Endothelial cell of umbilical vein (primary cell): ENCODE measurements at regions of chr1 and their contacts with region 1.

Region 1: DNA sequence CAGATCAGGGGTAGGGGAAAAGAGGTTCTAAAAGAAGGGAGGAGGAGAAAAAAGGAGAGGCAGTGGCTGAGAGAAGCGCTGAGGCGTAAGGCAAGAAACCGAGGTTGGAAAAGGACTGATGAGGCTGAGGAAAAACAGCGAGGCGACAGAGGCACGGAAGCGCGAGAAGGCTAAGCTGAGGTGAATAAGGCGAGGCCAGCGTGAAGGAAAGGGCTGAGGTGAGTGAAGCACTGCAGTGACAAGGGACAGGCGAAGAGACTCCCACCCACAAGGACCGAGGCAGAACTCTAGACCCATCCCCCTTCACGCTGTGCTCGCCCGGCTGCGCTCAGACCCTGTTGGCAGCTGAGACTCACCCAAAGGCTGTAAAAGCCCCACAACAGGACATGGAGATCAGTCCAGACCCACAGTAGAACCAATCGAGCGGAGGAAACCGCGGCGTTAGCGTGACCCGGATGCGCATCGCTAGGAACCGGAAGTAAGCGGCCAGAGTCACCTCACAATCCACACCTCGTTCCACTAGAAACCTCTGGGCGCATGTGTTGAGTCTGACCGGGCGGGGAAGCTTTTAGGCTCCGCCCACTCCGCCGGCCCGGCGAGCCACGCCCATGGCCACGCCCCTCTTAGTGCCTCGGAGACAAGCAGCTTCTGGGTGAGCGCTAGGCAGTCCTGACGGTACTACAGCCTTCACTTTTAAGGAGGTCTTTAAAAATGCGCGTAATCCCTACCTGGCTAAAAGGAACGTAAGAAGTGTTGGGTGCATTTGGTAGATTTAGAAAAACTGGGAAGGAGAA is at the start of gene EYA3:
- DNase-seq: peak; percentile 100
- H3K4me3 ChIP-seq: peak within 1 kb of the TSS; percentile 51 to 81 (median 73)
- H3K27ac ChIP-seq: peak within 1 kb of the TSS; percentile 45
- H3K4me1 ChIP-seq: peaks cover 12% of the 10 kb centered on the region
- H3K27me3 ChIP-seq: no peaks in the 10 kb centered on the region
- CTCF ChIP-seq: no peak
- POLR2A ChIP-seq: peak; percentile 96
- total RNA-seq, gene EYA3: 29.7 and 33.0 TPM in 2 replicates

Region 2: DNA sequence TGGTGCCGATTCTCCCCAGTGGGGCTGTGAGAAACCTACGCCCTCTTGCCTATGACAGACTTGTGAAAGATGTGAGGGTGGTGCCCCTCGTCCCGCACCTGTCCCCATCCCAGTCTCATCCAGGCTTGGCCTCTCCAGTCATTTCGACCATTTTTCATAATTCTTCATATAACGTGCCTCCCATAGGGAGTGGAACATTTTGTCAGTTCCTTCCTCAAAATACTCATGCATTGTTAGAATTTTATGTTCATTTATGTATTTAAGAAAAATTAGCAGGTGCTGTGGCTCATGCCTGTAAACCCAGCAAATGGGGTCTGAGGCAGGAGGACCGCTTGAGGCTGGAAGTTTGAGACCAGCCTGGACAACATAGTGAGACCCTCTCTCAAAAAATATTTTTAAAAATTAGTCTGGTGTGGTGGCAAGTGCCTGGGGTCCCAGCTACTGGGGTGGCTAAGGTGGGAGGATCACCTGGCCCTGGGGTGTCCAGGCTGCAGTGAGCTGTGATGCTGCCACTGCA is 173.2 kb before region 1 on chr1:
- CTCF ChIA-PET with region 1: no interaction called
- POLR2A ChIA-PET with region 1: no interaction called
- dilution Hi-C with region 1: no loop called
- intact Hi-C with region 1: no loop called
- DNase-seq: no peak
- H3K4me3 ChIP-seq: no peak overlapping the region
- H3K27ac ChIP-seq: no peak overlapping the region
- H3K4me1 ChIP-seq: peaks cover 5% of the 10 kb centered on the region
- H3K27me3 ChIP-seq: no peaks in the 10 kb centered on the region
- CTCF ChIP-seq: no peak
- POLR2A ChIP-seq: no peak

Region 3: DNA sequence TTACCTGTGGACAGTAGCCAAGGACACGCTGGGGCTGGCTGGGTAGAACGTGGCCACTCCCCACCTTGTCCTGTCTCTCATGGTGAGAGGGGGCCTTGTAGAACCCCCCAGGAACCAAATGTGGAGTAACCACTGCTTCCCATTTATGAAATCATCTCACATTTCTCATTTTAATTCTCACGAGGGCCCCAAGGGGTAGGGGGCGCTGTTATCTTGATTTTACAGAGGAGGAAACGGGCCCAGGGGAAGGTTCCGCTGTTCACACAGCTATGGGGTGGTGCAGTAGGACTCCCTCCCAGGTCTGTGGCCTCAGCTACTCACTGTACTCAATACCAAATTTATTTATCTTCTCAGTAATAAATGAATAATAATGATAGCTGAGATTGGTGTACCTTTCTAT is 148.1 kb before region 1 on chr1:
- CTCF ChIA-PET with region 1: interaction called, 7 read pairs
- POLR2A ChIA-PET with region 1: no interaction called
- dilution Hi-C with region 1: no loop called
- intact Hi-C with region 1: loop called (anchors 1 kb)
- DNase-seq: peak; percentile 44
- H3K4me3 ChIP-seq: no peak overlapping the region
- H3K27ac ChIP-seq: no peak overlapping the region
- H3K4me1 ChIP-seq: peaks cover 7% of the 10 kb centered on the region
- H3K27me3 ChIP-seq: peaks cover 0 to 5% of the 10 kb centered on the region in 2 experiments
- CTCF ChIP-seq: peak; percentile 34 to 44
- POLR2A ChIP-seq: no peak

Region 4: DNA sequence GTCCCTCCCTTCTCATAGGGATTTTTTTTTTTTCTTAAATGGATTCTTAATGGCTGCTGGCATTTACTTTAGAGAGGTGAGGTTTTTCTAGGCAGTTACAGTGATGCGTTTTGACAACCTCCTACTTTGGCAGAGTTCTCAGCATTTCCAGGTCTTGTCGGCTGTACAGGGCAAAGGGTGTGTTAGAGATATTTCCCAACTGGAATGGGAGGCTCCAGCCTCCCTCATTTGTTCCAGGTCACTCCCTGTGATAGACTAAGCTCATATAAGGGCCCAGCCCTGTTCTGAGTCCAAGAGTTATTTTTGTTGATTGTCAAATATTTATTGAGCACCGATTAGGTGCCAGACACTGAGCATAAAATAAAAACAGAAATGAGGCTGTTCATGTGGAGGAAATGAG is 136.2 kb before region 1 on chr1:
- CTCF ChIA-PET with region 1: no interaction called
- POLR2A ChIA-PET with region 1: no interaction called
- dilution Hi-C with region 1: no loop called
- intact Hi-C with region 1: no loop called
- DNase-seq: no peak
- H3K4me3 ChIP-seq: no peak overlapping the region
- H3K27ac ChIP-seq: no peak overlapping the region
- H3K4me1 ChIP-seq: no peaks in the 10 kb centered on the region
- H3K27me3 ChIP-seq: peaks cover 0 to 2% of the 10 kb centered on the region in 2 experiments
- CTCF ChIP-seq: no peak
- POLR2A ChIP-seq: no peak

Region 5: DNA sequence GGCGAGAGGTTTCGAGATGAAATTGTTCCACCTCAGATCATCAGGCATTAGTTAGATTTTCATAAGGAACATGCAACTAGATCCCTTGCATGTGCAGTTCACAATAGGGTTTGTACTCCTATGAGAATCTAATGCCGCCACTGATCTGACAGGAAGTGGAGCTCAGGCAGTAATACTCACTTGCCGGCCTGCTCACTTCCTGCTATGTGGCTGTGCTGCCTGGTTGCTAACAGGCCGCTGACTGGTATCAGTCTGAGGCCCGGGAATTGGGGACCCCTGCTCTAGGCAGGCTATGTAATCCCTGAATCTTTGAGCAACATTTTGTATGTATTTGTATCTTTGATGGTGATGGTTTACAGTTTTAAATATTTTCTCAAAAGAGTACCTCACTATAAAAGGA is 96.1 kb before region 1 on chr1:
- CTCF ChIA-PET with region 1: interaction called, 10 read pairs
- POLR2A ChIA-PET with region 1: interaction called, 3 read pairs
- dilution Hi-C with region 1: no loop called
- intact Hi-C with region 1: loop called (anchors 1 kb)
- DNase-seq: peak; percentile 60
- H3K4me3 ChIP-seq: no peak overlapping the region
- H3K27ac ChIP-seq: peak overlapping the region; percentile 46
- H3K4me1 ChIP-seq: peaks cover 35% of the 10 kb centered on the region
- H3K27me3 ChIP-seq: no peaks in the 10 kb centered on the region
- CTCF ChIP-seq: no peak
- POLR2A ChIP-seq: no peak

Region 6: GRCh38 chr1:28104866-28105467 is 16.6 kb after region 1 on chr1:
- CTCF ChIA-PET with region 1: interaction called, 11 read pairs
- POLR2A ChIA-PET with region 1: interaction called, 4 read pairs
- dilution Hi-C with region 1: no loop called
- intact Hi-C with region 1: loop called (anchors 2 kb)
- DNase-seq: peak; percentile 45
- H3K4me3 ChIP-seq: no peak overlapping the region
- H3K27ac ChIP-seq: no peak overlapping the region
- H3K4me1 ChIP-seq: peaks cover 3% of the 10 kb centered on the region
- H3K27me3 ChIP-seq: no peaks in the 10 kb centered on the region
- CTCF ChIP-seq: no peak
- POLR2A ChIP-seq: no peak

Region 7: DNA sequence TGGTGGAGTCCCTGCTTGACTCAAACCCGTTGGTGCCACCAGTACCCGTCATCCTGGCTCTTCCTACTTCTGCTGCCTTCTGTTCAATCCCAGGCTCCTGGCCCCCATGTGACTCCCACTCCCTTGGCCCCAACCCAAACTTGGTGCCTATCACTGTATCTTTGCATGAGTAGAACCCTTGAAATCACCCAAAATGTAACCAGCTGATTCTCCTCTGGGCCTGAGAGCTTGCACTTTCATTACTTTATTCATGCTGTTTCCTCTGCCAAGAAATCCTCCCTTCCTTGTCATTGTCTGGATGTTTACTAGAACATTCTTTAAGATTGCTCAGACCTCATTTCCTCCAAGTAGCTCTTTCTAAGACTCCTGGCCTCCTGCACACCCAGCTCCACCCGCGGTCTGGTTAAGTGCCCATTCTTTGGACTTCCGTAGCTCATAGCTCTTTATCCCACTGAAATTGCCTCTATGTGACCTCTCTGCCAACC is 72.5 kb after region 1 on chr1:
- CTCF ChIA-PET with region 1: interaction called, 12 read pairs
- POLR2A ChIA-PET with region 1: interaction called, 3 read pairs
- dilution Hi-C with region 1: no loop called
- intact Hi-C with region 1: loop called (anchors 1 kb)
- DNase-seq: peak; percentile 89
- H3K4me3 ChIP-seq: no peak overlapping the region
- H3K27ac ChIP-seq: peak overlapping the region; percentile 89
- H3K4me1 ChIP-seq: peaks cover 6% of the 10 kb centered on the region
- H3K27me3 ChIP-seq: no peaks in the 10 kb centered on the region
- CTCF ChIP-seq: no peak
- POLR2A ChIP-seq: no peak

Region 8: DNA sequence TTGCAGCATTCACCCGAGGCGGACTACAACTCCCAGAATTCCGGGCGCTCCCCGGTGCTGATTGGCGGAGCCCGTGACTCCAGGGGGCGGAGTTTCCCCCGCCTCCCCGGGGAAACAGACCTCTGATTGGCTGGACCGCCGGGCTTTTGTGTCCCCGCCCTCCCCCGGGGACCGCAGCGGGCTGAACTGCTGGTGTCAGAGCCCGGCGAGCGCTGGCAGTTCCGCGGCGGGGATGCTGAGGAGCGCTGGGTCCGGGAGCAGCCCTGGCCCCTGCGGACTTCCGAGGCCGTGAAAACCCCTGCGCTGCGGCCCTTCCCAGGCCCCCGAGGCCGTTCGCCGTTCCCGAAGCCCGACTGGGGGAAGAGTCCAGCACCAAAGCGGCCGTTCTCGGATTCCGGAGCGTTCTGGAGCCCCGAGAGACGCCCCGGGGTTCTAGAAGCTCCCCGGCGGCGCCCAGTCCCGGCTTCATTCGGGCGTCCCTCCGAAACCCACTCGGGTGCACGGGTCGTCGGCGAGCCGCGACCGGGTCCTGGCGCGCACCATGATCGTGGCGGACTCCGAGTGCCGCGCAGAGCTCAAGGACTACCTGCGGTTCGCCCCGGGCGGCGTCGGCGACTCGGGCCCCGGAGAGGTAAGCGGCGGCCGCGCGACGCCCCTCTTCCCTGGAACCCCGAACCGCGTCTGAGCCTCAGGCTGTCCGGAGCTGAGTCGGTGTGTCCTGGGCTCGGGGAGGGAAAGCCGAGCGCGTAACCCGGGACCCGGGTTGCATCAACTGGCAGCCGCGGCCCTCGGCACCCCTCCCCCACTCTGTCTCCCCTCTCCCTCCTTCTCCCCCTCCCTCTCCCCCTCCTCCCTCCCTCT is 171.2 kb after region 1 on chr1 and contains the start of gene SESN2:
- CTCF ChIA-PET with region 1: no interaction called
- POLR2A ChIA-PET with region 1: no interaction called
- dilution Hi-C with region 1: no loop called
- intact Hi-C with region 1: no loop called
- DNase-seq: peak; percentile 98
- H3K4me3 ChIP-seq: peak within 1 kb of the TSS; percentile 77 to 98 (median 80)
- H3K27ac ChIP-seq: peak within 1 kb of the TSS; percentile 34
- H3K4me1 ChIP-seq: peaks cover 12% of the 10 kb centered on the region
- H3K27me3 ChIP-seq: peaks cover 0 to 3% of the 10 kb centered on the region in 2 experiments
- CTCF ChIP-seq: no peak
- POLR2A ChIP-seq: peak; percentile 98
- total RNA-seq, gene SESN2: 13.1 and 13.2 TPM in 2 replicates